Calu3 (cell line): ENCODE measurements at regions of chr17 and their contacts with region 1.

Region 1: DNA sequence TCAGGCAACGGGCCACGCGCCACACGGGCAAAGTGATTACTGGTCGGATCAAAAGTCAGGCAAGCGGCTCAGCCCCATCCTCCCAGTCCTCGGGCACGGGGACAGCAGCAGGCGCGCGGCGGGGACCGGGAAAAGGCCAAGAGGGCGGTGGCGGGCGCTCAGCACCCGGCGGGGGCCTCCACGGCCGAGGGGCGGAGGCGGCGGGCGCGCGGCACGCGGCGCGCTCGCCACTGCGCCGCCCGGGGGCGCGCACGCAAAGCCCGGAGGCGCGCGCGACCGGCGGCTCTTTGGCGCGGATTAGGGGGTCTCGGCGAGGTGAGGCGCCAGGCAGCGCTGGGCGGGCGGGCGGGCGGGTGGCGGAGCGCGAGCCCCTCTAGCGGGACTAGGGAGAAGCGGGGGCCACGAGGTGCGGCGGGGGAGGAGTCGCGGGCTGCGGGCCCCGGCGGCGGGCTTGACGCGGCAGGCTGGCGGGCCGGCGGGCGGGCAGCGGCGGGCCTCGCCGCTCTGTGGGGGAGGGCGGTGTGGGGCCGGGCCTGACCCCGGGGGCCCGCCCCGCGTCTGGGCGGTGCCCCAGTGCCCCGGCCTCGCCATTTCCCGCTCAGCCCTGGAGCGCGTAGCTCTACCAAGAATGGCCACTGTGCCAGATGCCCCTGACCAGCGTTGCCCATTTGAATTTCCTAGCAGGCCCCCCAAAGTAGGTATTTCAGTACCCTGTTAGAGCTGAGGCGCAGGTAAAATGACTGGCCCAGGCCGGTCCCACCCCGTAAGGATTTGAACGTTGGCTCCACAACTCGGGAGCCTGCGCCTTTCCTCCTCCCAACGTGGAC is at the starts of genes ACACA and TADA2A:
- DNase-seq: peak; percentile 99
- H3K4me3 Mint-ChIP-seq: peak within 1 kb of the TSS; percentile 96
- H3K27ac Mint-ChIP-seq: peak within 1 kb of the TSS; percentile 86
- H3K4me1 Mint-ChIP-seq: peaks cover 22% of the 10 kb centered on the region
- H3K27me3 Mint-ChIP-seq: no peaks in the 10 kb centered on the region
- CTCF ChIP-seq: peak; percentile 59
- total RNA-seq, gene ACACA: 335 and 392 TPM in 2 replicates
- total RNA-seq, gene TADA2A: 97.6 and 102 TPM in 2 replicates

Region 2: GRCh38 chr17:37489197-37490001 is 82.6 kb after region 1 on chr17 and contains the start of gene DUSP14:
- CTCF ChIA-PET with region 1: no interaction called
- intact Hi-C with region 1: loop called (anchors 5 kb)
- DNase-seq: peak; percentile 99
- H3K4me3 Mint-ChIP-seq: peak within 1 kb of the TSS; percentile 79
- H3K27ac Mint-ChIP-seq: peak within 1 kb of the TSS; percentile 72
- H3K4me1 Mint-ChIP-seq: peaks cover 50% of the 10 kb centered on the region
- H3K27me3 Mint-ChIP-seq: no peaks in the 10 kb centered on the region
- CTCF ChIP-seq: no peak
- total RNA-seq, gene DUSP14: 75.2 and 77.6 TPM in 2 replicates

Region 3: GRCh38 chr17:37521821-37522220 is 115.0 kb after region 1 on chr17:
- CTCF ChIA-PET with region 1: interaction called, 16 read pairs
- intact Hi-C with region 1: no loop called
- DNase-seq: no peak
- H3K4me3 Mint-ChIP-seq: no peak overlapping the region
- H3K27ac Mint-ChIP-seq: no peak overlapping the region
- H3K4me1 Mint-ChIP-seq: no peaks in the 10 kb centered on the region
- H3K27me3 Mint-ChIP-seq: no peaks in the 10 kb centered on the region
- CTCF ChIP-seq: no peak